RWPE1 (cell line): ENCODE measurements at regions of chr16 and their contacts with region 1.

Region 1: DNA sequence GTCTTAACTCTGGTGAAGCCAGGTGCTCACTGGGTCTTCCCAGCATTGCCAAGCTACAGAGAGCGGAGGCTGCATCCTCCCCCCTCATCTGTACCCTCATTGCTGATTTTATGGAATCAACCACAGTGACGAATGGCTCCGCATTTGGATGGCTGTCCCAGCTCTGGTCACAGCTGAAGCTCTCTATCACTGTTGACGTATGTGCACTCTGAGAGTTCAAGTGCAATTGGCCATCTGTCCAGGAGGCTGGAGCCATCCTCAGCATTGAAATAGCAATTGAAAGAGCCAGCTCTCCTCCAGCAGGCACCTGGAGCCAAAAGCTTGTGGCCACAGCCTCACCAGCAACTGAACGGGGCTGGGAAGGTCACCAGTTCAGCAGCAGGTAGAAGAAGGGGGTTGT is 494.1 kb downstream of the TMEM114 start:
- DNase-seq: no peak
- H3K27ac ChIP-seq: no peak overlapping the region
- CTCF ChIP-seq: no peak

Region 2: DNA sequence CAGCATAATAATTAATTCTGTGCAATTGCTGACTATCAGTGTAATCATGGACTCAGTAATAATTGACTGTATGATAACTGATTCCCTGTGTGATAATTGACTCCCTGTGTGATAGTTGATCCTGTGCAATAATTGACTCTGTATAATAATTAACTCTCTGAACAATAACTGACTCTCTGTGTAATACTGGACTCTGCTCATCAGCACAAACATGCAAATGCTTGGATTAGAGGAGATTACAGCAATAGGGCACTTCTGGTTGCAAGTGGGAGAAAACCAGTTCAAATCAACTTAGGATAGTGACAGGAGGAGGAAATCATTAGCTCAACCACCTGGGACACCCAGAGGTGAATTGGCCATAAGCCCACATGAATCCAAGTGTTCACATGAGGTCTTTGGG is 181.5 kb before region 1 on chr16:
- CTCF ChIA-PET with region 1: interaction called, 10 read pairs
- POLR2A ChIA-PET with region 1: no interaction called
- DNase-seq: no peak
- H3K27ac ChIP-seq: no peak overlapping the region
- CTCF ChIP-seq: no peak

Region 3: DNA sequence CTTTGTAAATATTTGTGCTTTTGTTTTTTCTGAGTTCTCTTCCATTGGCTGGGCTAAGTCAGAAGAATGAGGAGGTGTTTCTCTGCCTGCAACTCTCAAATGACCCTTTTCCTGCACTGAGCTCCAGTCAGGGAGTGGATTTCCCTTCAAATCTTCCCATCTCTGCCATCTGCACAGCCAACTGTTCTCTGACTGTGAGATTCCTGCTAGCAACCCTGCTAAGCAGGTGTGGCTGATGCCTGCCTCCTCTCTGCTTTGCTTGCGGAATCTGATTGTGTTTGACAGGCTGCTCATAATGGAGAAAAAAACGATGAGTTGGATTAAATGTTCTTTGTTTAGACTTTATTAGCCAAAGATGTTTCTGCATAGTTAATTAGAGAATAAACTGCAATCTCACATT is 25.7 kb before region 1 on chr16:
- CTCF ChIA-PET with region 1: no interaction called
- POLR2A ChIA-PET with region 1: no interaction called
- DNase-seq: no peak
- H3K27ac ChIP-seq: no peak overlapping the region
- CTCF ChIP-seq: no peak

Region 4: DNA sequence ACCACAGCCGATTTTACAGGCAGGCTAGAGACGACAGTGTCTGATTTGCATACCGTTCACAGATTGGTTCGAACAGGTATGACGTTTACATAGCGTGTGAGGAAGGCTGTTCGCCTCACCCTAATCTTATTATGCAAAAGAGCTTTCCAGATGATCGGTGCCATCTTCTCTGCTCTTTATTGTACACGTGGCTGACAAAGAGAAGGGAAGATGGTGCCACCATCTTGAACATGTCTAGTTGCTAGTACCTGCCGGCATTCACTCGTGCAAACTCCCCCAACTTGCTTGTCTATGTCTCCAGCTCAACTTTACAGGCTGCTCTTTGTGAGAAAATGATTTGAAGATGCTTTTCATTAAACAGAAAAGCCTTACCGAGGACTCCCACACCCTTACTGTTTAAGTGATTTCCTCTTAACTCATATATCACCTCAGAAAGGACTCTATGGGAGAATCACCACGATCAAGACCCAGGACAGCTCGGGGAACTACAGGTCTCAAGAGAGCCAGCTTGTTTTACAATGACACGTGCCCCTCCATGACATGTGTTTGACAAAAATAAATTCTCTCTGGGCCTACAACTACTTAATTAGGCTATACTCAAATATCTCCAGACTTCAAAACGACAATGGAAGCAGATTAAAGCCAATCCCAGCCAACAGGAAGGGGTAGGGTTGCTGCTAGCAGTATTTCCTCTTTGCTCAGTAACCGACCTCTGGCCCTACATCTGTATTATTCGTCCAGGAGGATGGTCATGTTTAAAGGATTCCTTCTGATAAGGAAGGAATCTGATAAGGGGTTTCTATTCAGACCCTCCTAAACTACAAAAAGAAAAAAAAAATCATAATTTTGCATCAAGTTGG is 13.5 kb after region 1 on chr16:
- CTCF ChIA-PET with region 1: no interaction called
- POLR2A ChIA-PET with region 1: no interaction called
- DNase-seq: no peak
- H3K27ac ChIP-seq: no peak overlapping the region
- CTCF ChIP-seq: no peak